SK-N-SH (cell line): ENCODE measurements at regions of chr7 and their contacts with region 1.

Region 1: GRCh38 chr7:2082139-2082998 is 150.4 kb downstream of the MAD1L1 start:
- DNase-seq: peak; percentile 95
- H3K4me3 ChIP-seq: no peak overlapping the region
- H3K27ac ChIP-seq: peak overlapping the region; percentile 66 to 73
- H3K4me1 ChIP-seq: peaks cover 11 to 64% of the 10 kb centered on the region in 2 experiments
- H3K27me3 ChIP-seq: no peaks in the 10 kb centered on the region
- CTCF ChIP-seq: no peak
- EP300 ChIP-seq: peak in 1 of 2 experiments; percentile 67; a peak in 1 of 4 replicates
- RAD21 ChIP-seq: 0 out of 2 replicates have a peak, but pooled peaks have one; percentile 26

Region 2: DNA sequence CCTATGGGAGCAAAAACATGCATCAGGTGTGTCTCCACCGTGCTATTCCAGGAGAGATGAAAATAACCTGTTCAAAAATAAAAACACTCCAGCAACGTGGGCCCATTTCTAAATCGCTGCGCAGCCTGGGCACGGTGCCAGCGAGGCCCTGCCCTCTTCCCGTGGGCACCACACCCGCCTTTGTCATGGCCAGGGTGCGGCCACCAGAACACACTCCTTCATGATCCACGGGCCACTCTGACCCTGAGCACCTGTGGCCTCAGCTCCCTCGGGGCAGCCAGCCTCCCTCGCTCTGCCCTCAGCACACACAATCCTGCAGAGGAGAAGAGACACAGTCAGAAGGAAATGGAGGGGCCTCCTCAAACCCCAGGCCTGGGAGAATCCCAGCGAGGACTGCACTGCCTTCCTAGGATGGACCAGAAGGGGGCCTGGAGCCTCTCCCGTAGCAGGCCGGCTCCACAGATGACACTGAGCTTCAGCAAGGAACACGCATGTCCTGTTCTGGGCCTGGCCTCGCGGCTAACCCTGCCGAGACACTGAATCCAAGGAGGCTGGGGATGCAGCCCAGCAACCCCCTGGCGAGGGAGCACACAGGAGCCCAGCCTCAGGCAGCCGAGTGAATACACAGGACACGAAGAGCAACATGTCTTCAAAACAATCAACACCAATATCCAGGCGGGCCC is 18.7 kb before region 1 on chr7:
- CTCF ChIA-PET with region 1: interaction called, 12 read pairs
- POLR2A ChIA-PET with region 1: interaction called, 4 read pairs
- DNase-seq: peak; percentile 75
- H3K4me3 ChIP-seq: no peak overlapping the region
- H3K27ac ChIP-seq: peak overlapping the region in 1 of 2 experiments; percentile 24; a peak in 1 of 4 replicates
- H3K4me1 ChIP-seq: peaks cover 0 to 36% of the 10 kb centered on the region in 2 experiments; a peak in 2 of 4 replicates
- H3K27me3 ChIP-seq: no peaks in the 10 kb centered on the region
- CTCF ChIP-seq: no peak
- EP300 ChIP-seq: no peak
- RAD21 ChIP-seq: peak; percentile 47

Region 3: DNA sequence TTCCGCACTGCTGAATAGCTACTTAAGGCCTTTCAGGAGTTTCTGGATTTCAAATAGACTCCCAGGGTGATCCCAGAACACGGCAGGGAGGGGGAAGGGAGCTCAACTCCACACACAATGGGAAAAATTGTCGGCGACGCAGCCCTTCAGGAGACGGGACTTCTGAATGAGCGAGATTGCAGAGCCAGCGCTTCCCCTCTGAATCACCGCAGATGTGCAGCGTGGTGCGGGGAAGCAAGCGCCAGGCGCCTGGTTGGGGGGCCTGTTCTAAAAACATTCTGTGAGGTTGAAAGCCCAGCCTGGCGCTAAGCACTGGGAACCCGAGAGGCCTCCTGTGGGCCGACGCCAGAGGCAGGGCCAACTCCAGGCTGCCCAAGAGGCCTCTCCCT is 12.9 kb before region 1 on chr7:
- CTCF ChIA-PET with region 1: interaction called, 12 read pairs
- POLR2A ChIA-PET with region 1: interaction called, 5 read pairs
- DNase-seq: no peak
- H3K4me3 ChIP-seq: no peak overlapping the region
- H3K27ac ChIP-seq: no peak overlapping the region
- H3K4me1 ChIP-seq: peaks cover 0 to 25% of the 10 kb centered on the region in 2 experiments; a peak in 2 of 4 replicates
- H3K27me3 ChIP-seq: no peaks in the 10 kb centered on the region
- CTCF ChIP-seq: no peak
- EP300 ChIP-seq: no peak
- RAD21 ChIP-seq: no peak

Region 4: GRCh38 chr7:2093215-2093842 is 11.0 kb after region 1 on chr7:
- CTCF ChIA-PET with region 1: interaction called, 10 read pairs
- POLR2A ChIA-PET with region 1: interaction called, 4 read pairs
- DNase-seq: no peak
- H3K4me3 ChIP-seq: no peak overlapping the region
- H3K27ac ChIP-seq: peak overlapping the region in 1 of 2 experiments; percentile 28; a peak in 1 of 4 replicates
- H3K4me1 ChIP-seq: peaks cover 0 to 6% of the 10 kb centered on the region in 2 experiments; a peak in 2 of 4 replicates
- H3K27me3 ChIP-seq: no peaks in the 10 kb centered on the region
- CTCF ChIP-seq: no peak
- EP300 ChIP-seq: no peak
- RAD21 ChIP-seq: no peak

Region 5: GRCh38 chr7:2104107-2104710 is 21.8 kb after region 1 on chr7:
- CTCF ChIA-PET with region 1: interaction called, 10 read pairs
- POLR2A ChIA-PET with region 1: interaction called, 4 read pairs
- DNase-seq: peak; percentile 99
- H3K4me3 ChIP-seq: no peak overlapping the region
- H3K27ac ChIP-seq: peak overlapping the region; percentile 32 to 91
- H3K4me1 ChIP-seq: peaks cover 23 to 82% of the 10 kb centered on the region in 2 experiments
- H3K27me3 ChIP-seq: no peaks in the 10 kb centered on the region
- CTCF ChIP-seq: peak; percentile 75
- EP300 ChIP-seq: 0 out of 4 replicates have a peak, but pooled peaks of 1 of the 2 experiments have one; percentile 30
- RAD21 ChIP-seq: peak; percentile 77